Pancreas (tissue), 10 donors: ENCODE measurements at regions of chrX and their contacts with region 1.

Region 1: GRCh38 chrX:38175140-38175539 is 45.5 kb downstream of the SRPX start:
- DNase-seq: peak in 3 of 6 donors; percentile 5 to 54 (median 18)
- ATAC-seq: peak in 3 of 4 donors; percentile 82 to 84 (median 83)
- H3K4me3 ChIP-seq: no peak overlapping the region
- H3K27ac ChIP-seq: no peak overlapping the region
- H3K4me1 ChIP-seq: no peaks in the 10 kb centered on the region
- H3K27me3 ChIP-seq: peaks cover 0 to 10% (median 0%) of the 10 kb centered on the region in 4 donors
- CTCF ChIP-seq: peak in 3 of 4 donors; percentile 20 to 29 (median 28)

Region 2: GRCh38 chrX:37745354-37745753 is 429.8 kb before region 1 on chrX:
- intact Hi-C with region 1: loop called in 1 of 3 experiments (anchors 10 kb)
- DNase-seq: peak; percentile 30 to 86 (median 69)
- ATAC-seq: peak; percentile 86 to 98 (median 95)
- H3K4me3 ChIP-seq: no peak overlapping the region
- H3K27ac ChIP-seq: no peak overlapping the region
- H3K4me1 ChIP-seq: no peaks in the 10 kb centered on the region
- H3K27me3 ChIP-seq: no peaks in the 10 kb centered on the region
- CTCF ChIP-seq: peak; percentile 57 to 87 (median 85)